ENCODE measurements at regions of chr6 and their contacts with region 1.

Region 1: GRCh38 chr6:29589423-29590048 is 4.6 kb downstream of the OR2H2 start:
- DNase-seq: peak; percentile 64 to 74 (median 74)
- ATAC-seq: peak; percentile 89
- H3K4me3 ChIP-seq: no peak overlapping the region
- H3K27ac ChIP-seq: no peak overlapping the region
- H3K4me1 ChIP-seq: no peaks in the 10 kb centered on the region
- H3K27me3 ChIP-seq: peaks cover 3 to 10% of the 10 kb centered on the region in 2 experiments; a peak in 2 of 5 replicates
- CTCF ChIP-seq: peak; percentile 87 to 98 (median 97)
- EP300 ChIP-seq: no peak
- POLR2A ChIP-seq: no peak
- RAD21 ChIP-seq: peak; percentile 97 to 98

Region 2: DNA sequence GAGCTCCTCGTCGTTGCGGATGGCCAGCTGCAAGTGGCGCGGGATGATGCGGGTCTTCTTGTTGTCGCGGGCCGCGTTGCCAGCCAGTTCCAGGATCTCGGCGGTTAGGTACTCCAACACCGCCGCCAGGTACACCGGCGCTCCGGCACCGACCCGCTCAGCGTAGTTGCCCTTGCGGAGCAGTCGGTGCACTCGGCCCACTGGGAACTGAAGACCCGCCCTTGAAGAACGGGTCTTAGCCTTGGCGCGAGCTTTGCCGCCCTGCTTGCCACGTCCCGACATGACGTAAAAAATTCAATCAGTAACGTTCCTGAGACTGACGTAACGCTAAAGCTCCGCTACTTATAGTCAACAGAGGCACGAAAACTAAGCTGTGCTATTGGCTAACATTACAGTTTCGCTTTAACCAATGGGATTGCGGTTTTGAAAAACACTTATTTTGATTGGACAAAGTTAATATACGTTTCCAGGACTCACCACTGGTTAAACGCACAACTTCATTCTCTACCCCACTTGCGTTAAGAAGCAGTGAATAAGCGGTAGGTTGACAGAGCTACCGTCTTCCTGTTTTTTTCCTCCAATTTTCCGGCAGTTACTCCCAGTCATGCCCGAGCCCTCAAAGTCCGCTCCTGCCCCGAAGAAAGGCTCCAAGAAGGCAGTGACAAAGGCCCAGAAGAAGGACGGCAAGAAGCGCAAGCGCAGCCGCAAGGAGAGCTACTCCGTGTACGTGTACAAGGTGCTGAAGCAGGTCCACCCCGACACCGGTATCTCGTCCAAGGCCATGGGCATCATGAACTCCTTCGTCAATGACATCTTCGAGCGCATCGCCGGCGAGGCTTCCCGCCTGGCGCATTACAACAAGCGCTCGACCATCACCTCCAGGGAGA is 1751.2 kb before region 1 on chr6:
- CTCF ChIA-PET with region 1: no interaction called
- POLR2A ChIA-PET with region 1: no interaction called
- in situ Hi-C with region 1: no loop called
- intact Hi-C with region 1: no loop called
- DNase-seq: peak; percentile 85 to 99 (median 92)
- ATAC-seq: peak; percentile 74
- H3K4me3 ChIP-seq: peak overlapping the region; percentile 56
- H3K27ac ChIP-seq: peak overlapping the region; percentile 88
- H3K4me1 ChIP-seq: peaks cover 12 to 13% of the 10 kb centered on the region in 2 experiments; a peak in 3 of 5 replicates
- H3K27me3 ChIP-seq: no peaks in the 10 kb centered on the region
- CTCF ChIP-seq: peak in 1 of 3 experiments; percentile 9; a peak in 1 of 6 replicates
- EP300 ChIP-seq: peak; percentile 35
- POLR2A ChIP-seq: peak; percentile 99
- RAD21 ChIP-seq: peak in 1 of 2 experiments; percentile 4; a peak in 1 of 4 replicates

Region 3: GRCh38 chr6:29016559-29017427 is 572.7 kb before region 1 on chr6:
- CTCF ChIA-PET with region 1: interaction called, 3 read pairs
- POLR2A ChIA-PET with region 1: no interaction called
- in situ Hi-C with region 1: no loop called
- intact Hi-C with region 1: loop called (anchors 1 kb)
- DNase-seq: peak; percentile 73 to 96 (median 78)
- ATAC-seq: peak; percentile 96
- H3K4me3 ChIP-seq: peak overlapping the region; percentile 56
- H3K27ac ChIP-seq: peak overlapping the region; percentile 69
- H3K4me1 ChIP-seq: peaks cover 3 to 7% of the 10 kb centered on the region in 2 experiments; a peak in 3 of 5 replicates
- H3K27me3 ChIP-seq: no peaks in the 10 kb centered on the region
- CTCF ChIP-seq: peak; percentile 90 to 93 (median 93)
- EP300 ChIP-seq: no peak
- POLR2A ChIP-seq: no peak
- RAD21 ChIP-seq: peak; percentile 88 to 93

Region 4: DNA sequence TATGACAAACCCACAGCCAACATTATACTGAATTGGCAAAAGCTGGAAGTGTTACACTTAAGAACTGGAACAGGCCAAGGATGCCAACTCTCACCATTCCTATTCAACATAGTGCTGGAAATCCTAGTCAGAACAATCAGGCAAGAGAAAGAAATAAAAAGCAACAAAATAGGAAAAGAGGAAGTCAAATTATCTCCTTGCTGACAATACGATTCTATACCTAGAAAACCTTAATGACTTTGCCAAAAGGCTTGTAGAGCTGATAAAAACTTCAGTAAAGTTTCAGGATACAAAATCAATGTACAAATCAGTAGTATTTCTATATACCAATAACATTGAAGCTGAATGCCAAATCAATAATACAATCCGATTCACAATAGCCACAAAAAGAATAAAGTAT is 253.3 kb before region 1 on chr6:
- CTCF ChIA-PET with region 1: no interaction called
- POLR2A ChIA-PET with region 1: no interaction called
- in situ Hi-C with region 1: no loop called
- intact Hi-C with region 1: no loop called
- DNase-seq: no peak
- ATAC-seq: no peak
- H3K4me3 ChIP-seq: no peak overlapping the region
- H3K27ac ChIP-seq: no peak overlapping the region
- H3K4me1 ChIP-seq: no peaks in the 10 kb centered on the region
- H3K27me3 ChIP-seq: 0 out of 5 replicates have a peak, but pooled peaks cover 0 to 2% of the 10 kb centered on the region in 2 experiments
- CTCF ChIP-seq: no peak
- EP300 ChIP-seq: no peak
- POLR2A ChIP-seq: no peak
- RAD21 ChIP-seq: no peak

Region 5: DNA sequence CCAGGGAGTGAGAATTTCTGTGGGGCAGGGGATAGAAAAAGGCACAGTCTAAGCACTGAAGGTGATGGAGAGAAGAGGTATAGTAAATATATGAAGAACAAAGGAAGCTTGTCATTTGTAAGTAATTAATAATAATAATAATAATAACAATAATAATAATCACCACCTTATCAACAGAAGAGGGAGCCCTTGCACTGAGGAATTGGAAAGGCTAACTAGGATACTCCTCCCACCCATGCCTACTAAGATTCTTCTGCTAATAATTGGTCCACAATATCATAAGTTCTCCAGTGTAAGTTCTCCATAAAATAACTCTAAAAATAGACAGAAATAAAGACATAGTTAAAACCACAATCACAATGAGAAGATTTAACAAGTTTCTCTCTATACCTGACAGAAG is 213.5 kb before region 1 on chr6:
- CTCF ChIA-PET with region 1: no interaction called
- POLR2A ChIA-PET with region 1: no interaction called
- in situ Hi-C with region 1: no loop called
- intact Hi-C with region 1: loop called (anchors 1 kb)
- DNase-seq: peak in 1 of 4 experiments; percentile 5
- ATAC-seq: no peak
- H3K4me3 ChIP-seq: no peak overlapping the region
- H3K27ac ChIP-seq: no peak overlapping the region
- H3K4me1 ChIP-seq: no peaks in the 10 kb centered on the region
- H3K27me3 ChIP-seq: peaks cover 2 to 6% of the 10 kb centered on the region in 2 experiments; a peak in 1 of 5 replicates
- CTCF ChIP-seq: peak in 2 of 3 experiments; percentile 12 to 24; a peak in 2 of 6 replicates
- EP300 ChIP-seq: no peak
- POLR2A ChIP-seq: no peak
- RAD21 ChIP-seq: peak; percentile 32 to 52

Region 6: GRCh38 chr6:29439006-29439405 is 150.5 kb before region 1 on chr6 and contains the start of gene OR10C1:
- CTCF ChIA-PET with region 1: interaction called, 3 read pairs
- POLR2A ChIA-PET with region 1: no interaction called
- in situ Hi-C with region 1: no loop called
- intact Hi-C with region 1: loop called (anchors 1 kb)
- DNase-seq: no peak
- ATAC-seq: no peak
- H3K4me3 ChIP-seq: no peak within 1 kb of the TSS
- H3K27ac ChIP-seq: no peak within 1 kb of the TSS
- H3K4me1 ChIP-seq: 0 out of 5 replicates have a peak, but pooled peaks cover 0 to 3% of the 10 kb centered on the region in 2 experiments
- H3K27me3 ChIP-seq: peaks cover 0 to 11% of the 10 kb centered on the region in 2 experiments; a peak in 3 of 5 replicates
- CTCF ChIP-seq: no peak
- EP300 ChIP-seq: no peak
- POLR2A ChIP-seq: no peak
- RAD21 ChIP-seq: no peak
- polyA plus RNA-seq, gene OR10C1: not detected

Region 7: GRCh38 chr6:29465279-29465678 is 124.3 kb before region 1 on chr6:
- CTCF ChIA-PET with region 1: no interaction called
- POLR2A ChIA-PET with region 1: no interaction called
- in situ Hi-C with region 1: no loop called
- intact Hi-C with region 1: no loop called
- DNase-seq: no peak
- ATAC-seq: no peak
- H3K4me3 ChIP-seq: no peak overlapping the region
- H3K27ac ChIP-seq: no peak overlapping the region
- H3K4me1 ChIP-seq: no peaks in the 10 kb centered on the region
- H3K27me3 ChIP-seq: no peaks in the 10 kb centered on the region
- CTCF ChIP-seq: no peak
- EP300 ChIP-seq: no peak
- POLR2A ChIP-seq: no peak
- RAD21 ChIP-seq: no peak

Region 8: DNA sequence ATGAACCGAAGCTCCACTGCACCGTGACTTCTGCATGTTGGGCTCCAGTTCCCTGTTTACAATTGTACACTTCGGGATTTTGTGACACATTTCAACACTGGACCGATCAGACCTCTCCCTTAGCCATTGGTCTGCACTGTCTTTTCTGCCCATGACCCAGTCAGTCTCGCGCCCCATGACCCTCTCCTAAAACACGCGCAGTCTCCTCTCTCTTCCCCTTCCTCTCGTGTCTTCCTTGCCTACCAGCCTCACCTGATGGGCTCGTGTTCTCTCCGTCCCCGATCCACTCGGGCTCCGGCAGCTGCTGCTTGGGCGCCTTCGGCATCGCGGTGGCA is 981.2 kb after region 1 on chr6:
- CTCF ChIA-PET with region 1: no interaction called
- POLR2A ChIA-PET with region 1: no interaction called
- in situ Hi-C with region 1: no loop called
- intact Hi-C with region 1: no loop called
- DNase-seq: peak in 3 of 4 experiments; percentile 32 to 47 (median 46)
- ATAC-seq: peak; percentile 22
- H3K4me3 ChIP-seq: peak overlapping the region; percentile 67
- H3K27ac ChIP-seq: peak overlapping the region; percentile 92
- H3K4me1 ChIP-seq: peaks cover 24 to 37% of the 10 kb centered on the region in 2 experiments
- H3K27me3 ChIP-seq: no peaks in the 10 kb centered on the region
- CTCF ChIP-seq: no peak
- EP300 ChIP-seq: no peak
- POLR2A ChIP-seq: no peak
- RAD21 ChIP-seq: no peak